Breast epithelium (tissue), 4 donors: ENCODE measurements at regions of chr5 and their contacts with region 1.

Region 1: DNA sequence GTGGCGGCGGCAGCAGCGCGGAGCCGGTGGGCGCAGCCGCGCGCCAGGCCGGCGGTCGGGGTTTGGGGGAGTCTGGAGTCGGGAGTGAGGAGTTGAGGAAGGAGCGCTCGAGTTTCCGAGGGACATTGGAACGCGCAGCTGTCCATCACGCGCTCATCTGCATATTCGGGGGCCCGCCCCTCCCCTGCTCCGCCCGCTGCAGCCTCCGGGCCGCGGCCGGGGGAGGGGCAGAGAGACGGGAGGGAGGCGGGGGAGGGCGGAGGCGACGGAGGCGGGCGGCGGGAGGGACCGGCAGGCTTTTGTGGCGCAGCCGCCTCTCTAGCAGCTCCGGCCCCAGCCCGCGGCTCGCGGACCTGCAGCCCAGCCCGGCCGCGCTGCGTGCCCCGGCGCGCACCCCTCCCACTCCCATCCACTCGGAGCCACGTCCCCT is at the start of gene IRX2:
- DNase-seq: peak; percentile 91 to 96
- H3K4me3 ChIP-seq: peak within 1 kb of the TSS; percentile 60 to 98 (median 75)
- H3K27ac ChIP-seq: peak within 1 kb of the TSS; percentile 95 to 97
- H3K4me1 ChIP-seq: no peaks in the 10 kb centered on the region
- H3K27me3 ChIP-seq: peaks cover 0 to 3% of the 10 kb centered on the region in 2 donors
- CTCF ChIP-seq: no peak
- POLR2A ChIP-seq: no peak
- total RNA-seq, gene IRX2: 19.2 to 69.4 (median 26.2) TPM

Region 2: DNA sequence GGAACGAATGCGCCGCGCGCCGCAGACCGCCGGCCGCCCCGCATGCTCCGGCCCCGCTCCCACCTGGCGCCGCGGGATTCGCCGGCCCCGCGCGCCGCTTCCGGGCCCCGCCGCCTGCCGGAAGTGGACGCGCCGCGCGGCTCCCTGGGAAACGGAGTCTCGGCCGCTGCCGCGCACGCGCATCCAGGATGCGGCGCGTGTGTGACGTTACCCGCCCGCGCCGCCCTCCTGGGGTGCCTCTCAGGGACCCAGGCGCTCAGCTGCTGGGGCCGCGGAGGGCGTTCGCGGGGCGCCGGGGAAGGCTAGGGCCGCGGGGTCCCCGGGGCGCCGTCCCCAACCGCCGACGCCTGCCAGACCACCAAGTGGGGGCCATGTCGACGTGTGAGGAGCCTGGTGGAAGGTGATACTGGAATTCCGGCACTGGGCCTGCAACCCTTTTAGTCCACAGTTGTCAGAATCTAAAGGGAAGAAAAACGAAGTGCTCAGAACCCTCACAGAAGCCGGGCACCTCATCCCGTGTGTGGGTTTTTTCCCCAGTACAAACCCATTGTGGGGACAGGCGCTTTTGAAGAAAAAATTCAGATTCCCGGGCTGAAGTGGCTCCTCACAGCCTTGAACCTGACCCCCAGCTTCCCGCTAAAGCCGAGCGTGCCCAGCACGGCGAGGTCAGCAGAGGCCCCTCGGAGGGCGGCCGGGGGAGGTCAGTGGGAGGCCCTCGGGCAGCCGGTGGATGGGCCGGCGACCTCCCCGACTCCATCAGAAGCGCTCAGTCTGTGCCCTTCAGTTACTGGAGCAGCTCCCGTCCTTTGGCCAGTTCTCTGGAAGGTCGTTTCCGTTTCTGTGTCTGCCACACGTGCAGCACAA is 1406.4 kb before region 1 on chr5 and contains the start of gene CLPTM1L:
- intact Hi-C with region 1: loop called (anchors 5 kb)
- DNase-seq: peak; percentile 78 to 82
- H3K4me3 ChIP-seq: peak within 1 kb of the TSS; percentile 84 to 98 (median 93)
- H3K27ac ChIP-seq: peak within 1 kb of the TSS; percentile 88 to 93
- H3K4me1 ChIP-seq: peaks cover 0 to 5% of the 10 kb centered on the region in 2 donors
- H3K27me3 ChIP-seq: no peaks in the 10 kb centered on the region
- CTCF ChIP-seq: peak in 1 of 3 donors; percentile 19
- POLR2A ChIP-seq: no peak
- total RNA-seq, gene CLPTM1L: 94.0 to 121 (median 107) TPM

Region 3: GRCh38 chr5:2721385-2722138 is 30.0 kb before region 1 on chr5:
- intact Hi-C with region 1: no loop called
- DNase-seq: no peak
- H3K4me3 ChIP-seq: no peak overlapping the region
- H3K27ac ChIP-seq: no peak overlapping the region
- H3K4me1 ChIP-seq: no peaks in the 10 kb centered on the region
- H3K27me3 ChIP-seq: no peaks in the 10 kb centered on the region
- CTCF ChIP-seq: no peak
- POLR2A ChIP-seq: no peak

Region 4: GRCh38 chr5:4511996-4512662 is 1760.5 kb after region 1 on chr5:
- intact Hi-C with region 1: loop called (anchors 10 kb)
- DNase-seq: peak; percentile 72 to 85
- H3K4me3 ChIP-seq: peak overlapping the region in 2 of 3 donors; percentile 38 to 54
- H3K27ac ChIP-seq: peak overlapping the region; percentile 79 to 80
- H3K4me1 ChIP-seq: no peaks in the 10 kb centered on the region
- H3K27me3 ChIP-seq: no peaks in the 10 kb centered on the region
- CTCF ChIP-seq: peak in 2 of 3 donors; percentile 53 to 71
- POLR2A ChIP-seq: no peak